ENCODE measurements at regions of chr17 and their contacts with region 1.

Region 1: GRCh38 chr17:75350706-75351105 is 54.8 kb downstream of the GRB2 start:
- DNase-seq: no peak
- H3K4me3 ChIP-seq: no peak overlapping the region
- H3K27ac ChIP-seq: no peak overlapping the region
- H3K4me1 ChIP-seq: peaks cover 12% of the 10 kb centered on the region
- H3K27me3 ChIP-seq: no peaks in the 10 kb centered on the region
- CTCF ChIP-seq: no peak

Region 2: DNA sequence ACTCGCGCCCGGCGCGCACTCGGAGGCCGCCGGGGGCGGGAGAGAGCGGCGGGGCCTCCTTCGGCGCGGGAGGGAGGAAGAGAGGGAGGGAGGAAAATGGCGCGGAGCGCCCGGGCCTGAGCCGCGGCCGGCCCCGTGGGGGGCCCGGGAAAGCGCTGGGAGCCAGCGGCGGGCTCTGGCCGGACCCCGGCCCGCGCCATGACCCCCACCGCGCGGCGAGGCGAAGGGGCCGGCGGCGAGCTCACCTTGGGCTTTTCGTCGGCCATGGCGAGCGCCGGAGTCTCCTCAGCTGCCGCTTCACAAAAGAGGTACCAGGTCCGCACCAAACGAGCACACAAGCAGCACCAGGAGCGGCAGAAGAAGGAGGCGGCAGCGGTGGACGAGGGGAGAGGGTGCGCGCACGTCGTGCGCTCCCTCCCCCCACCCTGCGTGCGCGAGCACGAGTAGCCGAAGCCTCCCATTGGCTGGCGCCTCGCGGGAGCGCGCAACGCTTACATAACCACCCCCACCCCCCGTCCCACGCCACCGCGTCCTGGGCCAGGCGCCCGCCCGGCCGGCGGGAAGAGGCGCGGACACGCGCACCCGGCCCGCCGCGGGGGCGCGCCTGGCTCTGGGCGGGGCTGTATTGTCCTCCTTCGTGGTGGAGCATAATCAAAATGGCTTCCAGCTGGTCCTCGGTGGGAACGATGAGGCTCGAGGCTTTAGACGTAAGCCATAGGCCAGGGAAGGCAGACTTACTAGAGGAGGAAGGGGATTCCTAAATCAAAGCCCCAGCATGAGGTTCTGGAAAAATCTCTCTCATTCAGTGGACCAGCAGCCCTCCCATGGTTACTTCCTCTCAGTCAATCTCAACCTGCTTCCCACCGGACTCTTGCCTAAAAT is 167.9 kb before region 1 on chr17 and contains the start of gene SUMO2:
- CTCF ChIA-PET with region 1: no interaction called
- dilution Hi-C with region 1: no loop called
- in situ Hi-C with region 1: no loop called
- intact Hi-C with region 1: no loop called
- DNase-seq: peak; percentile 92
- H3K4me3 ChIP-seq: peak within 1 kb of the TSS; percentile 59 to 97 (median 76)
- H3K27ac ChIP-seq: peak within 1 kb of the TSS; percentile 83
- H3K4me1 ChIP-seq: peaks cover 10% of the 10 kb centered on the region
- H3K27me3 ChIP-seq: no peaks in the 10 kb centered on the region
- CTCF ChIP-seq: peak in 1 of 2 donors; percentile 45
- total RNA-seq, gene SUMO2: 49.7 to 279 TPM

Region 3: DNA sequence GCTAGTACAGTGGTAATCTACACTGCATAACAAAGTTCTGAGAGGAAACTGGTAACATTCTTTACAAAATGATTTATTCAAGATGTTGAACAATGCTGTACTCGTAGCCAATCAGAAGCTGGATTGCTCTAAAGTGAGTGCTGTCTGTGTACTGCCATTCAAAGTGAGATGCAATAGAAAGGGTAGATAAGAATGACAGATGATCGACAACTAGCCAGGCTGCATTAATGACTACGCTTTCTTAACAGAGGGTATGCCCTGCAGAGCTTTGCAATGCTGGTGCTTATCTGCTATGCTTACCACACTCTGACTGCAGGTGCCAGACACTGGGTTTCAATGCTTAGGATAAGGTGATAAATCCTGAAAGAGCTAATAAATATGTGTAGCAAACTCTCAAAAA is 15.4 kb before region 1 on chr17:
- CTCF ChIA-PET with region 1: no interaction called
- dilution Hi-C with region 1: no loop called
- in situ Hi-C with region 1: no loop called
- intact Hi-C with region 1: loop called (anchors 2 kb)
- DNase-seq: no peak
- H3K4me3 ChIP-seq: no peak overlapping the region
- H3K27ac ChIP-seq: no peak overlapping the region
- H3K4me1 ChIP-seq: no peaks in the 10 kb centered on the region
- H3K27me3 ChIP-seq: no peaks in the 10 kb centered on the region
- CTCF ChIP-seq: no peak

Region 4: GRCh38 chr17:75364078-75364477 is 13.4 kb after region 1 on chr17:
- CTCF ChIA-PET with region 1: no interaction called
- dilution Hi-C with region 1: no loop called
- in situ Hi-C with region 1: no loop called
- intact Hi-C with region 1: loop called (anchors 2 kb)
- DNase-seq: peak; percentile 74
- H3K4me3 ChIP-seq: no peak overlapping the region
- H3K27ac ChIP-seq: no peak overlapping the region
- H3K4me1 ChIP-seq: peaks cover 15% of the 10 kb centered on the region
- H3K27me3 ChIP-seq: no peaks in the 10 kb centered on the region
- CTCF ChIP-seq: no peak

Region 5: GRCh38 chr17:75693500-75694481 is 343.1 kb after region 1 on chr17:
- CTCF ChIA-PET with region 1: no interaction called
- dilution Hi-C with region 1: no loop called
- in situ Hi-C with region 1: no loop called
- intact Hi-C with region 1: no loop called
- DNase-seq: peak; percentile 93
- H3K4me3 ChIP-seq: no peak overlapping the region
- H3K27ac ChIP-seq: peak overlapping the region; percentile 90
- H3K4me1 ChIP-seq: peaks cover 97% of the 10 kb centered on the region
- H3K27me3 ChIP-seq: no peaks in the 10 kb centered on the region
- CTCF ChIP-seq: peak; percentile 2 to 31

Measured in mammary epithelial cell (primary cell).